GM12878 (cell line): ENCODE measurements at regions of chr1 and their contacts with region 1.

Region 1: DNA sequence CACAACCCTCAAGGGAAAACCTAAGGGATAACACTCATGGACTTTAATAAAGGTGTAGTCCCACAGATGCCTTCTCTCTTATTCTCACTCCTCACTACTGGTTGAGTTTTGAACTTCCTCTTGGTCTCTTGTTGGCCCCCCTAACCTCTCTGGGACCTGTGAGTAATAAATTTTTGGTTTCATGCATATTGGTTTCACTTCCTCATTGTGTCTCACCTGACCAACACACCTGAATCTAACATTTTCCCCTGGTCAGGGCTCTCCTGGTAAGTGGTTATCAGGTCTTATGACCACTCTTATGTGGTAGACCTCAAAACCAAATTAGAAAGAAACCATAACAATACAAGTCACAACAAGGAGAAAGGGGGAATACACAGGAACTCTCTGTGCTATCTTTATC is 60.5 kb upstream of the PRMT6 start:
- DNase-seq: peak; percentile 86
- ATAC-seq: peak; percentile 96
- H3K4me3 ChIP-seq: no peak overlapping the region
- H3K27ac ChIP-seq: no peak overlapping the region
- H3K4me1 ChIP-seq: no peaks in the 10 kb centered on the region
- H3K27me3 ChIP-seq: no peaks in the 10 kb centered on the region
- CTCF ChIP-seq: no peak
- EP300 ChIP-seq: peak; percentile 97 to 99
- POLR2A ChIP-seq: no peak
- RAD21 ChIP-seq: no peak; the same call in 1 of the 2 replicates

Region 2: DNA sequence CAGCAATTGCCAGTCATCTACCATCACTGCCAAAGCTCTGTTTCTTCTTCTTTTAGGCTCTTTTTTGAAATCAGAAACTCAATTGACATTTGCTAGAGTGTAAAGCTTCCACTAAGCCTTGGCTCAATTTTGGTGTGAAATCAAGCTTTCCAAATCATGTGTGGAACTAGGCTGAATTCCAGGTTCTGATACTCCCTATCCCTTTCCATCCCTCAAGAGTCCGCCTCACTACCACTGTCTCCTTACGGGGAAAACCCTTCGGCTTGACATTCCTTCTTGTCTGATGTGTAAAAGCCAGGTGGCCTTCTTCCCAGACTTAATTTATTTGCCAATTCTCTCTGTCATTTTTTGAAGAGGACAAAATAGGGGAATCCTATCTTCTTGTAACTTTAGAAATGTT is 13.3 kb after region 1 on chr1:
- CTCF ChIA-PET with region 1: interaction called, 4 read pairs
- POLR2A ChIA-PET with region 1: no interaction called
- RAD21 ChIA-PET with region 1: interaction called, 11 read pairs
- SMC1A ChIA-PET with region 1: interaction called, 6 read pairs
- in situ Hi-C with region 1: no loop called
- intact Hi-C with region 1: loop called (anchors 2 kb)
- DNase-seq: no peak
- ATAC-seq: no peak
- H3K4me3 ChIP-seq: no peak overlapping the region
- H3K27ac ChIP-seq: no peak overlapping the region
- H3K4me1 ChIP-seq: no peaks in the 10 kb centered on the region
- H3K27me3 ChIP-seq: no peaks in the 10 kb centered on the region
- CTCF ChIP-seq: no peak
- EP300 ChIP-seq: no peak
- POLR2A ChIP-seq: no peak
- RAD21 ChIP-seq: no peak

Region 3: DNA sequence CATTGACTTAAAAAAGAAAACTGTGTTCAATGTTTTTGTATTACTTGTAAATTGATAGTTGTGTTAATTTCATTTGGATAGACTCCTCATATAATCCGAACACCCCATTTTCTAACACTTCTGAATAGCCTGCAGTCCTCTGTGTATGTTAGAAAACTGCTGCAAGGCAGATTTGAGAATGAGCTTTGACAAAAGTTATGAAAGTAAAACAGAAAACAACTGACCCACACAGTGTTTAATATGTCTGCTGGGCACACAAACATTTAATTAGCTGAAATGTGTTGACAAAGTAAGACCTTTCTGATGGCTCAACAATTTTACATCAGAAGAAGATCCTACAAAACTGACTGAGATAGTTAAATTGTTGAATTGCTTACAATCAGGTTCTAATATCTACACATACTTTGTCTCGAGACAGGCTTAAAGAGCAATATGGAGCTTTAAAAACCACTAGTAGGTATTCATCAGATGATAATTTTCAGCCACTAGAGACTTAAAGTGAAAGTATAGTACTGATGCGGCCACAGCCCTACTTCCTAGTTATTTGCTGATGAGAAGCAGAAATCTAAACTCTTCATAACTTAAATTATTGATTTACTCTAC is 20.5 kb after region 1 on chr1:
- CTCF ChIA-PET with region 1: no interaction called
- POLR2A ChIA-PET with region 1: no interaction called
- RAD21 ChIA-PET with region 1: interaction called, 11 read pairs
- SMC1A ChIA-PET with region 1: interaction called, 15 read pairs
- in situ Hi-C with region 1: no loop called
- intact Hi-C with region 1: loop called (anchors 2 kb)
- DNase-seq: peak; percentile 28
- ATAC-seq: peak; percentile 96
- H3K4me3 ChIP-seq: peak overlapping the region; percentile 33; the same call in 1 of the 2 replicates
- H3K27ac ChIP-seq: no peak overlapping the region
- H3K4me1 ChIP-seq: no peaks in the 10 kb centered on the region
- H3K27me3 ChIP-seq: no peaks in the 10 kb centered on the region
- CTCF ChIP-seq: no peak
- EP300 ChIP-seq: no peak
- POLR2A ChIP-seq: no peak
- RAD21 ChIP-seq: no peak